Activated T-helper 2 cell treated with anti-CD3 and anti-CD28 coated beads, Interferon-gamma antibody, Interleukin-2, Interleukin-4, amounts not matched to agents 10 μg/mL and 5 μg/mL and 100 μg/mL, durations not matched to agents 14 hours and 24 hours and 36 hours (primary cell): ENCODE measurements at regions of chr15 and their contacts with region 1.

Region 1: DNA sequence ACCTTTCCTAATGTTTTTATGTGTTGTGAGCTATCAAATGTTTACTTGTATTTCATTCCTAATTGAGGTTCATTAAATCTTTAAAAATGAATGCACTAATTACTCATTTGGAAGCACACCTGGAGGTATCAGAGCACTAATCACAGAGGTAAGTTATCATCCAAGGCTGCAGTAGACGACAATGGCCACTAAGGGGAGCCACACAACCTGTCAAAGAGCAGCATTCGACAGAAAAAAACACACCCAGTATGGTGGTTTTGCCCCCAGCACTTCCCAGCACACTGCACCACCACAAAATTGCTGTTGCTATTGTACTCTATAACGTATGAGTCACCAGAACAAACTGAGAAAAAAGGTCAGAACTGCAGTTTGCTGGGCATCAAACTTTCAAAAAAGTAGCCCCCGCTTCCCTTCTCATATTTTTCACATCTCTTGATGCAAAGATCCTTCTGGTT is 205.9 kb upstream of the IGF1R start:
- DNase-seq: peak; percentile 36
- H3K4me3 Mint-ChIP-seq: no peak overlapping the region
- H3K27ac Mint-ChIP-seq: no peak overlapping the region
- H3K4me1 Mint-ChIP-seq: peaks cover 3% of the 10 kb centered on the region
- H3K27me3 Mint-ChIP-seq: peaks cover 3% of the 10 kb centered on the region

Region 2: GRCh38 chr15:98455965-98456364 is 13.6 kb after region 1 on chr15:
- intact Hi-C with region 1: no loop called
- DNase-seq: no peak
- H3K4me3 Mint-ChIP-seq: no peak overlapping the region
- H3K27ac Mint-ChIP-seq: no peak overlapping the region
- H3K4me1 Mint-ChIP-seq: no peaks in the 10 kb centered on the region
- H3K27me3 Mint-ChIP-seq: peaks cover 14% of the 10 kb centered on the region

Region 3: GRCh38 chr15:98548154-98548971 is 106.0 kb after region 1 on chr15:
- intact Hi-C with region 1: loop called (anchors 10 kb)
- DNase-seq: peak; percentile 21
- H3K4me3 Mint-ChIP-seq: peak overlapping the region; percentile 75
- H3K27ac Mint-ChIP-seq: peak overlapping the region; percentile 50
- H3K4me1 Mint-ChIP-seq: peaks cover 8% of the 10 kb centered on the region
- H3K27me3 Mint-ChIP-seq: peaks cover 52% of the 10 kb centered on the region

Region 4: DNA sequence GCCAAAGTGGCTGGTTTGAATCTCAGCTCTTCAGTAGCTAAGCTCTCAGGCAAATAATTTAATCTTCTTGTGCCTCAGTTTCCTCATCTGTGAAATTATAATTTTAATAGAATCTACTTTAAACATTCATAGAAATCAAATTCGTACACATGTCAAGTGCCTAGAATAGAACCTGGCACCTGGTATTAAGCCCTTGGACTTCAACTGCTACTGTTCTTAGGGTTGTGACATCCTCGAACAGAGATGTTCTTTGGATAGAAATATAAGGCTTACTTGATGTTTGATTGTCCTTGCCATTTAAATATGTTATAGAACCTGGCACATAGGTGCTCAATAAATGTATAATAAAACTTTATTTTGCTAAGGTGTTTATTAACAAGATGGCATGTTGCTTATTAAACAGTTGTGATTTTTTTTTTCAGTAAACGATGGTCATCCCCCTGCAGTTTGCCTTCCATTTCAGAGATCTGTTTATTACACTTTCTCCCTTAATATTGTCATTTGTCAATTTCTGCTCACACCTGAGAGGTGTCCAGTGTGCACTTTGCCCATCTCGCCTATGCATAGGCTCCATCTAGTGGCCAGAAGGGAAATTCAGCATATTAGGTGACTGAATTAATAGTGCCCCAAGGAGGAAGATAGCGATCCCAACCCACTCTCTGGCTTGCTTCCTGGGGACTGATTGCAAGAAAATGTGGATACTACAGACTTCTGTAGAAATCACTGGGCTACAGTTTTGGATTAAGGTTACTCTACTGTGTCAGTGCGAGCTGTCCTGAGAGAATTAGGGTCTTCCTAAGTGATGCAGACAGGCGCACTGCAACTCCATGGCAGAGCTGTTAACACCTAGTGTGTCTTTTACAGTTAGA is 216.7 kb after region 1 on chr15:
- intact Hi-C with region 1: loop called (anchors 5 kb)
- DNase-seq: no peak
- H3K4me3 Mint-ChIP-seq: no peak overlapping the region
- H3K27ac Mint-ChIP-seq: no peak overlapping the region
- H3K4me1 Mint-ChIP-seq: peaks cover 10% of the 10 kb centered on the region
- H3K27me3 Mint-ChIP-seq: peaks cover 14% of the 10 kb centered on the region

Region 5: GRCh38 chr15:98881526-98882520 is 439.4 kb after region 1 on chr15:
- intact Hi-C with region 1: loop called (anchors 10 kb)
- DNase-seq: no peak
- H3K4me3 Mint-ChIP-seq: no peak overlapping the region
- H3K27ac Mint-ChIP-seq: no peak overlapping the region
- H3K4me1 Mint-ChIP-seq: no peaks in the 10 kb centered on the region
- H3K27me3 Mint-ChIP-seq: no peaks in the 10 kb centered on the region

Region 6: GRCh38 chr15:99076552-99077308 is 634.3 kb after region 1 on chr15:
- intact Hi-C with region 1: loop called (anchors 1 kb)
- DNase-seq: peak; percentile 24
- H3K4me3 Mint-ChIP-seq: peak overlapping the region; percentile 73
- H3K27ac Mint-ChIP-seq: no peak overlapping the region
- H3K4me1 Mint-ChIP-seq: peaks cover 2% of the 10 kb centered on the region
- H3K27me3 Mint-ChIP-seq: peaks cover 22% of the 10 kb centered on the region

Region 7: GRCh38 chr15:99213187-99213811 is 770.9 kb after region 1 on chr15:
- intact Hi-C with region 1: loop called (anchors 10 kb)
- DNase-seq: peak; percentile 44
- H3K4me3 Mint-ChIP-seq: no peak overlapping the region
- H3K27ac Mint-ChIP-seq: no peak overlapping the region
- H3K4me1 Mint-ChIP-seq: no peaks in the 10 kb centered on the region
- H3K27me3 Mint-ChIP-seq: no peaks in the 10 kb centered on the region